ENCODE measurements at regions of chr17 and their contacts with region 1.

Region 1: GRCh38 chr17:80414803-80415625 is at the start of gene ENDOV:
- DNase-seq: peak; percentile 89 to 93
- H3K4me3 ChIP-seq: peak within 1 kb of the TSS; percentile 75 to 98 (median 89)
- H3K27ac ChIP-seq: peak within 1 kb of the TSS; percentile 95 to 98
- H3K4me1 ChIP-seq: peaks cover 0 to 15% of the 10 kb centered on the region in 2 donors
- H3K27me3 ChIP-seq: no peaks in the 10 kb centered on the region
- CTCF ChIP-seq: no peak
- POLR2A ChIP-seq: peak; percentile 40
- total RNA-seq, gene ENDOV: 13.8 to 17.0 (median 16.7) TPM

Region 2: GRCh38 chr17:80454557-80455335 is 39.7 kb after region 1 on chr17:
- intact Hi-C with region 1: no loop called
- DNase-seq: peak; percentile 95 to 97
- H3K4me3 ChIP-seq: peak overlapping the region; percentile 58 to 89 (median 72)
- H3K27ac ChIP-seq: peak overlapping the region; percentile 96 to 98
- H3K4me1 ChIP-seq: no peaks in the 10 kb centered on the region
- H3K27me3 ChIP-seq: no peaks in the 10 kb centered on the region
- CTCF ChIP-seq: peak in 1 of 3 donors; percentile 12
- POLR2A ChIP-seq: peak; percentile 78

Region 3: DNA sequence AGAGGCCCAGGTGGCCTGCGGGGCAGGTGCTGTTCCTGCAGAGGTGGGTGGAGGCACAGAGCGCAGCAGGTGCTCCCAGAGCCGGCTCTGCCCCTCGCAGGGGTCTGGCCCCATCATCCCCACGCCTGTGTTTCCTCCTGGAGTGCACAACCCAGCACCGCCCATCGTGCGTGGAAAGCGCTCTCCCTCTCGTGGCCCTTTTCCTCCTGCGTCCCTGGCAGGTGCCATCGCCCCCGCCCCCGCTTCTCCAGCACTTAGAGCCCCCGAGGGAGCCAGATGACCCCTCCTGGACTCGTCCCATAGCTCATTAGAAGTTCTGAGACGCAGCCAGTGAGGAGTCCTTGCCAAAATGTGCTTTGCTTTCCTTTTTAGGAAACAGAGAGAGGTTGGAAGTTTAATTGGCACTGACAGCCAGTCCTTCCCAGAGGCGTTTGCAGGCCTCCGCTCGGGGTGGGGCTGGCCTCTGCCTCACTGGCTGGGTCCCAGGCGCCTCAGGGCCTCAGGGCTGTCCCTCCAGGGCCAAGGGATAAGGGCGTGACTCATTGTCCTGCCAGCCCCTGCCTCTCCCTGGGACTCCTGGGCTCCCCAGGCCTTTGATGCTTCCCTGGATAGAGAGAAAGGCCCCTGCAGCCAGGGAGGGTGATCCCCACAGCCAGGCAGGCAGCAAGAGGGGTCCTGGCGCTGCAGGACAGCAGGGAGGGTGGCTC is 544.5 kb after region 1 on chr17:
- intact Hi-C with region 1: loop called (anchors 10 kb)
- DNase-seq: peak; percentile 65 to 69
- H3K4me3 ChIP-seq: peak overlapping the region in 1 of 3 donors; percentile 37
- H3K27ac ChIP-seq: peak overlapping the region; percentile 75 to 90
- H3K4me1 ChIP-seq: peaks cover 15% of the 10 kb centered on the region in 2 donors
- H3K27me3 ChIP-seq: no peaks in the 10 kb centered on the region
- CTCF ChIP-seq: no peak
- POLR2A ChIP-seq: no peak

Region 4: DNA sequence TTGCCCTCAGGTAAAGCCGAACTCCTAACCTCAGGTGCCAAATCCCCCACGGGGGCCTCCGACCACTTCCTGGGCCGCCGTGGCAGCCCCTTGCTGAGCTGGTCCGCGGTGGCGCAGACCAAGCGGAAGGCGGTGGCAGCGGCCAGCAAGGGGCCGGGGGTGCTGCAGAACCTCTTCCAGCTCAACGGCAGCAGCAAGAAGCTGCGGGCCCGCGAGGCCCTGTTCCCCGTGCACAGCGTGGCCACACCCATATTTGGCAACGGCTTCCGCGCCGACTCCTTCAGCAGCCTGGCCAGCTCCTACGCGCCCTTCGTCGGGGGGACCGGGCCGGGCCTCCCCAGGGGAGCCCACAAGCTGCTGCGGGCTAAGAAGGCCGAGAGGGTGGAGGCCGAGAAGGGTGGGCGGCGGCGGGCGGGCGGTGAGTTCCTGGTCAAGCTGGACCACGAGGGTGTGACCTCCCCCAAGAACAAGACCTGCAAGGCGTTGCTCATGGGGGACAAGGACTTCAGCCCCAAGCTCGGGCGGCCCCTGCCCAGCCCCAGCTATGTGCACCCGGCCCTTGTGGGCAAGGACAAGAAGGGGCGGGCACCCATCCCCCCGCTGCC is 1045.9 kb after region 1 on chr17:
- intact Hi-C with region 1: no loop called
- DNase-seq: no peak
- H3K4me3 ChIP-seq: peak overlapping the region in 2 of 3 donors; percentile 11 to 18
- H3K27ac ChIP-seq: no peak overlapping the region
- H3K4me1 ChIP-seq: no peaks in the 10 kb centered on the region
- H3K27me3 ChIP-seq: no peaks in the 10 kb centered on the region
- CTCF ChIP-seq: no peak
- POLR2A ChIP-seq: no peak

Measured in breast epithelium (tissue), 4 donors.